Psoas muscle (tissue), 8 donors: ENCODE measurements at regions of chr4 and their contacts with region 1.

Region 1: GRCh38 chr4:82248903-82249632 is 124.7 kb downstream of the HNRNPD start:
- DNase-seq: no peak
- ATAC-seq: no peak
- H3K4me3 ChIP-seq: no peak overlapping the region
- H3K27ac ChIP-seq: no peak overlapping the region
- H3K4me1 ChIP-seq: no peaks in the 10 kb centered on the region
- H3K27me3 ChIP-seq: no peaks in the 10 kb centered on the region
- CTCF ChIP-seq: no peak

Region 2: GRCh38 chr4:82201805-82202641 is 47.0 kb before region 1 on chr4:
- intact Hi-C with region 1: loop called in 1 of 2 experiments (anchors 1 kb)
- DNase-seq: no peak
- ATAC-seq: no peak
- H3K4me3 ChIP-seq: no peak overlapping the region
- H3K27ac ChIP-seq: no peak overlapping the region
- H3K4me1 ChIP-seq: no peaks in the 10 kb centered on the region
- H3K27me3 ChIP-seq: no peaks in the 10 kb centered on the region
- CTCF ChIP-seq: peak; percentile 34